CD8-positive, alpha-beta memory T cell (primary cell): ENCODE measurements at regions of chr13 and their contacts with region 1.

Region 1: GRCh38 chr13:112942689-112943308 is 26.2 kb upstream of the MCF2L start:
- DNase-seq: peak; percentile 86 to 96 (median 93)
- H3K4me3 ChIP-seq: peak overlapping the region; percentile 76
- H3K4me3 Mint-ChIP-seq: peak overlapping the region; percentile 74 to 96 (median 89)
- H3K27ac ChIP-seq: no peak overlapping the region
- H3K27ac Mint-ChIP-seq: peak overlapping the region in 6 of 8 donors; percentile 54 to 89 (median 80)
- H3K4me1 ChIP-seq: peaks cover 7% of the 10 kb centered on the region
- H3K4me1 Mint-ChIP-seq: peaks cover 6 to 7% (median 6%) of the 10 kb centered on the region in 3 donors
- H3K27me3 ChIP-seq: no peaks in the 10 kb centered on the region
- H3K27me3 Mint-ChIP-seq: peaks cover 18 to 60% of the 10 kb centered on the region in 2 donors

Region 2: DNA sequence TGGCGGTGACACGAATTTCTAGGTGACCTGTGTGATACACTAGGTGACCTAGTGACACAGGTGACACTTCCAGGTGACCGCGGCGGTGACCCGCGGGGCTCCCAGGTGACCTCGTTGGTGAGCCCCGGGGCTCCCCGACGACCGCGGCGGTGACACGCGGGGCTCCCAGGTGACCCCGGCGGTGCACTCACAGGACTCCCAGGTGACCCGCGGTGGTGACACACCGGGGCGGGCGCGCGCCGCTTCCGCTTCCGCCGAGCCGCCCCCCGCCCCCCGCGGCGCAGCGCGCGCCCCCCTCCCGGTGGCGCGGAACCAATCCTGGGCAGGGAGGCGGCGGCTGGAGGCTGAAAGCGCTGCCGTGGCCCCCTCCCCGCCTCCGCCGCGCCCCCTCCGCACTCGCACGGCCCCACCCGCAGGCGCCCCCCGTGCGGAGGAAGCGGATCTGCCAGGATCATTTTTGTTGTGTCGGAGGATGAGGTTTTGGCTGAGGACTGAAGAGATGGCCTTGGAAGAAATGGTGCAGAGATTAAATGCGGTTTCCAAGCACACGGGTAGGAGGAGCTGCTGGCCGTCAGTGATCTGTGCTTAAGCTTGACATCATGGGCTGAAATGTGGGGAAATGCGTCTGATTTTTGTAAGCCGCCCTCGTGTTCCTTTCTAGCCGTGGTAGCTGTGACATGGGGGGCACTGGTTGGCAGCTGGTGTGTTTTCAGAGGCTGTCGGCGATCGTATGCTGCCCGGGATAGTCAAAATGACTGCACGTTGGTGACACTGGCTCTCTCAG is 26.3 kb after region 1 on chr13 and contains the start of gene MCF2L:
- CTCF ChIA-PET with region 1: interaction called, 15 read pairs
- POLR2A ChIA-PET with region 1: no interaction called
- DNase-seq: peak; percentile 43 to 83 (median 74)
- H3K4me3 ChIP-seq: peak within 1 kb of the TSS; percentile 86
- H3K4me3 Mint-ChIP-seq: peak within 1 kb of the TSS; percentile 87 to 99 (median 92)
- H3K27ac ChIP-seq: peak within 1 kb of the TSS; percentile 64
- H3K27ac Mint-ChIP-seq: peak within 1 kb of the TSS; percentile 75 to 96 (median 91)
- H3K4me1 ChIP-seq: peaks cover 15% of the 10 kb centered on the region
- H3K4me1 Mint-ChIP-seq: peaks cover 18 to 41% (median 40%) of the 10 kb centered on the region in 3 donors
- H3K27me3 ChIP-seq: no peaks in the 10 kb centered on the region
- H3K27me3 Mint-ChIP-seq: no peaks in the 10 kb centered on the region
- total RNA-seq, gene MCF2L: 9.1 to 9.6 TPM